Heart right ventricle (tissue), 16 donors: ENCODE measurements at regions of chr6 and their contacts with region 1.

Region 1: DNA sequence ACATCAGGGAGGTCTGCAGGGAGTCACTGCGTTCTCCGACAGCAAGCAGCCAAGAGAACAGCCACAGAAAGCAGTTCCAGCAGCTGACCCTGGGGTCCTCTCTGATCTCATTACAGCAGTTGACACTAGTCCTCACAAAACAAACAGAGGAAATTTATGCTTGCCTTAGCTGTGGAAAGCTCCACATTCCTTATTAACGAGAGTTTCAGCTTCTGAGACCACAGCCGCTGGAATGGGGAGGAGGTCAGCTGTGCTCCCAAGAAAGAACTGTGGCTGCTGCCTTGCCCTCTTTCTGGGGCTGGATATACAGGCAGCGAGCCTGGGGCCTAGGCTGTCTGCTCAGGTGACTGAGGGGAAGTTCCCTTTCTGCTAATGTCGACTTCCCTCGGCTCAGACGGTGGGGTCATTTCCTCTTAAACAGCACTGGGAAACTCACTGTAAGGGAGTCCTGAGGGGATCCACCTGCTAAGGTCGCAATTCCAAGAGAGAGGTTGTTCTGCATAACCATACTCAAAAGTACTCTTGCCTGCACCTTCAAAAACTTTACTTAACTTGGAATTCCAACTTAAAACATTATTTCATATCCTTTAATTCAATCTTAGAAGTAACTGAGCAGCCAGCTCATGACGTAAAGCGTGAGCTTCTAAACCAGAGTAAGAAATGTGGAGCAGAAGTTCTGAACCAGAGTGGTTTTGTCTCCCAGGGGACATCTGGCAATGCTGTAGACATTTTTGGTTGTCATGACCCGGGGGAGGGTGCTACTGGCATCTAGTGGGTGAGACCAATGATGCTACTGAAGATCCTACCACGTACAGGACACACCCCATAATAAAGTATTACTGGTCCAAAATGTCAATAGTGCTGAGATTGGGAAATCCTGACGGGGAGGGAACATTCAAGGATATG is 80.3 kb downstream of the BACH2 start:
- DNase-seq: no peak
- ATAC-seq: no peak
- H3K4me3 ChIP-seq: no peak overlapping the region
- H3K27ac ChIP-seq: peak overlapping the region in 6 of 10 donors; percentile 33 to 96 (median 49)
- H3K4me1 ChIP-seq: peaks cover 6 to 54% (median 34%) of the 10 kb centered on the region in 9 donors
- H3K27me3 ChIP-seq: no peaks in the 10 kb centered on the region
- CTCF ChIP-seq: no peak

Region 2: DNA sequence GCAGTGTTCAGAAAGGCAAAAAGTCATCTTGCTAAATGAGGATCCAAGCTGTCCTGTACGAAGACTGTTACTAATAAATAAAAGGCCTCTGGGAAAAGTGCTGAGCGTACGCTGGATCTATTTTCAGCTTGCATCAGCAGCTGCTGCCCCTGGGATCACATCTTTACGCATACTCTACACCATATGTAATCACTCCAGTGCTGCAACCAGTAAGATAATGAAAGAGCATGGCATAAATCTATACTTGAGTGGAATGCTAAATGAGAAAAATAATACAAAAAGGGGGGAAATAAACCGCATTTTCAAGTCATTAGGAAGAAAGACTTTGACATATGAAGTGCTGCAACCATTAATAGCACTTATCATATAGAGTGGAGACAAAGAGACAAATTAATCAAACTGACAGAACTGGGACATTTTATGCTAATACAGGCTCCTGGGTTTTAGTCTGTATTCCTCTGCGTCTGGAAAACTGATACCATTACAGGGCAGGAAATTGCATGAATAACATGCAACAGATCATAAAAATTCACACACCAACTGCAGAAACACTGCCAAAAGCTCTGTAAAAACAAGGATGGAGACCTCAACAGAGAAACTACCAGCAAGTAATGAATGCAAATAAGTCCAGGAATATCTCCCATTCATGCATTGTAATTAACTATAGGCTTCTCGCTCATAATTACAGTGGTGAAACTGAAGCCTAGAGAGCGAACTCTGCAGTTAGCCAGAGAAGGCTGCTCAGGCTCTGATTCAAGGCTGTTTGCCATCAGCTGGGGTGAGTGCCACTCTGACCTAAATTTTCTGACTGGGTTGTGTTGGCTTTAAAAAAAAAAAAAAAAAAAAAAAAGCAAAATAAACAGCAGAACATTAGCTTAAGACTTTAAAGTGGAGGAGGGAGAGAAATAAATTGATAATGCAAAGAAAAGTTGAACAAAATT is 238.2 kb before region 1 on chr6:
- intact Hi-C with region 1: loop called in 4 of 10 experiments (anchors 5 to 10 kb)
- DNase-seq: peak in 1 of 2 donors; percentile 29
- ATAC-seq: peak; percentile 56 to 89 (median 80)
- H3K4me3 ChIP-seq: no peak overlapping the region
- H3K27ac ChIP-seq: peak overlapping the region in 7 of 10 donors; percentile 1 to 48 (median 24)
- H3K4me1 ChIP-seq: peaks cover 2 to 38% (median 29%) of the 10 kb centered on the region in 9 donors
- H3K27me3 ChIP-seq: no peaks in the 10 kb centered on the region
- CTCF ChIP-seq: no peak

Region 3: DNA sequence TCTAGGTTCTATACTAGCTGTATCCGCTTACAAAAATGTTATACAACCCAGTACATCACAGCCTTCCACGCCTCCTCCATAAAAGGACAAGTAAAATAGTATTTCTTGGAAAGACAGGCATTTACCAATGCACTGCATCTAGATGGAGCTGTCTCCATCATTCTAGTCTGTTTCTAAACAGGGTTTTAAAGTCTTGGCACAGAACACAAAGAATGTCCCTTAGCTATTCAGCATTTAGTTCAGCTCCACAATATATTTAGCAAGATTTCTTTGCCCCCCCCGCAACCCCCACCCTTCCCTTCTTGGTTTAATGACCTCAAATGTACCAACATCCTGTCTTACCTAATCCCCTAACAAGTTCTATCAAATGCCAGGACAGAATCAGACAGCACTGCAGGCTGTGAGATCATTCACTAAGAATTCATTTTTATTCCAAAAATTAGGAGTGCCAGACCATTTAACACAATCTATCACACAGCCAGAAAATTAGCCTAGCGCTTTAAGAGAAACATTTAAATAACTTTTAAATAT is 118.3 kb before region 1 on chr6:
- intact Hi-C with region 1: loop called in 3 of 10 experiments (anchors 5 to 10 kb)
- DNase-seq: peak; percentile 17 to 39
- ATAC-seq: peak; percentile 86 to 93 (median 89)
- H3K4me3 ChIP-seq: no peak overlapping the region
- H3K27ac ChIP-seq: peak overlapping the region in 9 of 10 donors; percentile 37 to 85 (median 72)
- H3K4me1 ChIP-seq: peaks cover 2 to 45% (median 27%) of the 10 kb centered on the region in 9 donors
- H3K27me3 ChIP-seq: no peaks in the 10 kb centered on the region
- CTCF ChIP-seq: peak in 7 of 9 donors; percentile 25 to 63 (median 51)

Region 4: GRCh38 chr6:90285611-90286381 is 69.5 kb after region 1 on chr6:
- intact Hi-C with region 1: loop called in 6 of 10 experiments (anchors 2 to 10 kb)
- DNase-seq: peak; percentile 77 to 88
- ATAC-seq: peak; percentile 95 to 100 (median 98)
- H3K4me3 ChIP-seq: peak overlapping the region in 6 of 10 donors; percentile 30 to 46 (median 40)
- H3K27ac ChIP-seq: peak overlapping the region in 9 of 10 donors; percentile 3 to 76 (median 61)
- H3K4me1 ChIP-seq: peaks cover 3 to 33% (median 26%) of the 10 kb centered on the region in 9 donors
- H3K27me3 ChIP-seq: no peaks in the 10 kb centered on the region
- CTCF ChIP-seq: no peak

Region 5: GRCh38 chr6:90805619-90806155 is 589.4 kb after region 1 on chr6:
- intact Hi-C with region 1: no loop called
- DNase-seq: no peak
- ATAC-seq: no peak
- H3K4me3 ChIP-seq: no peak overlapping the region
- H3K27ac ChIP-seq: no peak overlapping the region
- H3K4me1 ChIP-seq: no peaks in the 10 kb centered on the region
- H3K27me3 ChIP-seq: no peaks in the 10 kb centered on the region
- CTCF ChIP-seq: no peak